CD8-positive, alpha-beta T cell (primary cell): ENCODE measurements at regions of chr7 and their contacts with region 1.

Region 1: DNA sequence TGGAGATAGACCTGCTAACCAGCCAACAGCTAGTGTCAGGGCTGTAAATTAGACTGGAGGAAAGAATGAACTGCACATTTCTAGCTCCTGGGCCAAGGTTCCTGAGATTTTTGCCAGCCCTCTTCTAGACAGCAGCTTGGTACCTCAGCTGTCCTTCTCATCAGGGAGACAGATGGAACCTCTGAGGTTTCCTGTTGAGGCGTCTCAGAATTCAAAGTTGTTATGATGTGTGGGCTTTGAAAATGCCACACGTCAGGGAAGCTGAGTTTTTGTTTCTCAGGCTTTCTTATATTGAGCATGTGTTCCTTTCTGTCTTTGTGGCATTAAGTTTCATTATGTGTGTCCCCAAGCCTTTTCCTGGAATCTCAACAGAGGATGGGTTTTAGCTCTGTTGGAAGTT is 736.6 kb downstream of the AUTS2 start:
- DNase-seq: peak in 2 of 9 experiments; percentile 28 to 59
- ATAC-seq: peak; percentile 62
- H3K4me3 ChIP-seq: no peak overlapping the region
- H3K4me3 Mint-ChIP-seq: no peak overlapping the region
- H3K27ac ChIP-seq: peak overlapping the region in 1 of 2 experiments; percentile 23
- H3K27ac Mint-ChIP-seq: peak overlapping the region; percentile 79
- H3K4me1 ChIP-seq: peaks cover 16% of the 10 kb centered on the region
- H3K4me1 Mint-ChIP-seq: peaks cover 19% of the 10 kb centered on the region
- H3K27me3 ChIP-seq: no peaks in the 10 kb centered on the region
- H3K27me3 Mint-ChIP-seq: no peaks in the 10 kb centered on the region
- CTCF ChIP-seq: no peak

Region 2: GRCh38 chr7:70647801-70648498 is 313.1 kb after region 1 on chr7:
- CTCF ChIA-PET with region 1: no interaction called
- POLR2A ChIA-PET with region 1: interaction called, 3 read pairs
- intact Hi-C with region 1: loop called in 1 of 2 experiments (anchors 2 kb)
- DNase-seq: peak; percentile 47 to 96 (median 83)
- ATAC-seq: peak; percentile 87
- H3K4me3 ChIP-seq: peak overlapping the region in 1 of 2 experiments; percentile 10
- H3K4me3 Mint-ChIP-seq: peak overlapping the region; percentile 46
- H3K27ac ChIP-seq: peak overlapping the region; percentile 17 to 62
- H3K27ac Mint-ChIP-seq: peak overlapping the region; percentile 85
- H3K4me1 ChIP-seq: peaks cover 28% of the 10 kb centered on the region
- H3K4me1 Mint-ChIP-seq: peaks cover 34% of the 10 kb centered on the region
- H3K27me3 ChIP-seq: peaks cover 0 to 2% of the 10 kb centered on the region in 2 experiments
- H3K27me3 Mint-ChIP-seq: no peaks in the 10 kb centered on the region
- CTCF ChIP-seq: no peak